GM10248 (cell line): ENCODE measurements at regions of chr17 and their contacts with region 1.

Region 1: DNA sequence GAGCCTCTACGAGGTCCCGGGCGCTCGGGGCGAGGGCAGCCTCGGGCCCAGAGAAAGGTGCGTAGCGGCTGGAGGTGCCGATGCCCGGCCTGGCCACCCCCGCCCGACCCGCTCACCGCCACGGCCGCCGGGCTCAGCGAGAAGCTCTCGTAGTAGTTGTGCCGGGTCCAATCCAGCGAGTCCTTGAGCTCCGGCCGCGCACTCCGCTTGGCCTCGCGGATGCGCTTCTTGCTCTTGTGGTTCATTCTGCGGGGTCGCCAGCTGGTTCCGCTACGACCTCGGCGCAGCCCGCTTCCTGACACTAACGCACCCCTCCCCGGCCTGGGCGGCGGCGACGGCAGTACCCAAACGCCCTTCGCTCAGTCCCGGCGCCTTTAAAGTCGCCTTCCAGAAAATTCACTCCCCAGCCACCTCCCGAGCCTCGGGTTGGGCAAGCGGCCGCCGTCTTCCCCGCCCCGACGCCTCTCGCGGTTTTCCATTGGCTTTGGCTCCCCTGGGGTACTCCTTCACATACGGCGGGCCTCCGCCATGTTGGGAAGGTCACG is at the start of gene JMJD6:
- DNase-seq: peak; percentile 94
- CTCF ChIP-seq: no peak

Region 2: GRCh38 chr17:76714822-76715495 is 11.3 kb before region 1 on chr17:
- CTCF ChIA-PET with region 1: interaction called, 45 read pairs
- POLR2A ChIA-PET with region 1: interaction called, 13 read pairs
- DNase-seq: peak; percentile 64
- CTCF ChIP-seq: peak; percentile 76

Region 3: DNA sequence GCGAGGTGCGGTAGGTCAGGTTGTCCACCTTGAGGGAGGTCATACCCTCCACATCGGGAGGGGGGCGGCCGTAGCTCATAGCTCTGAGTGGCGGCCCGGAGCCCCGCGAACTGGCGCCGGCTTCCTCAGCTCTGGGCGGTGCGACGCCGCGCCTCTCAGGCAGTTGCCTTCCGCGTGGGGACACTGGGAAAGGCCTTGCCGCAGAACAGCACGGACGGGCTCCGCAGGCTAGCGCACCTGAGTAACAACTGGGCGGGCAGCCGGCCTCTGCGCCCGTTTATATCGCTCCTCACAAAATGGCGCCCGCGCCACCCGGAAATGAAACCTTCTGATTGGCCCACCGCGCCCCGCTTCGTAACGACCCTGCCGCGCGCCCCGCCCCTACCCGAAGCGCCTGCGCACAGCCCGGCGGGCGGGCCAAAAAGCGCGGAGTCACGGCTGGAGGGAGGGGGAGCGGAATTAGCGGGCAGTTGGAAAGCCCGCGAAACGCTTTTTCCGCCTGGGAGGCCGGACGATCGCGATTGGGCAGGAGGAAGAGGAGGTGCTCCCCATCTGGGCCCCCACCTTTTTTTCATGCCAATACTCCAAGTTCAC is 10.9 kb after region 1 on chr17 and contains the start of gene SRSF2:
- CTCF ChIA-PET with region 1: interaction called, 13 read pairs
- POLR2A ChIA-PET with region 1: interaction called, 58 read pairs
- DNase-seq: peak; percentile 97
- CTCF ChIP-seq: no peak

Region 4: DNA sequence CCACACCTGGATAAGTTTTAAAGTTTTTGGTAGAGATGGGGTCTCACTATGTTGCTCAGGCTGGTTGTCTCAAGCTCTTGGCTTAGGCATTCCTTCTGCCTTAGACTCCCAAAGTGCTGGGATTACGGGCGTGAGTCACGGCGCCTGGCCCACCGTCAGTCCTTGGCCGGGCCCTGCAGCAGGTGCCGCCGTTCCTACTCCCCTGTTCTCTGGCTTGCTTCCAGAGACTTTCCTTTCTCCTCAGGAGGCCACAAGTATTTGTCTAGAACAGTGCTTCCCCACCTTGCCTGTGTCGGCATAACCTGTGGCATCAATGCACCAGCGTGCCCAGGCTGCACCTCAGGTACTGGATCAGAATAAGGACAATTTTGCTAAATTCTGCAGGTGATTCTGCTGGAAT is 138.9 kb after region 1 on chr17:
- CTCF ChIA-PET with region 1: no interaction called
- POLR2A ChIA-PET with region 1: no interaction called
- DNase-seq: no peak
- CTCF ChIP-seq: no peak